ENCODE measurements at regions of chr5 and their contacts with region 1.

Region 1: GRCh38 chr5:56900858-56901578 is 8.4 kb upstream of the SETD9 start:
- DNase-seq: no peak
- ATAC-seq: peak; percentile 39 to 90 (median 69)
- H3K4me3 ChIP-seq: no peak overlapping the region
- H3K27ac ChIP-seq: no peak overlapping the region
- H3K4me1 ChIP-seq: no peaks in the 10 kb centered on the region
- H3K27me3 ChIP-seq: no peaks in the 10 kb centered on the region
- CTCF ChIP-seq: peak; percentile 73

Region 2: DNA sequence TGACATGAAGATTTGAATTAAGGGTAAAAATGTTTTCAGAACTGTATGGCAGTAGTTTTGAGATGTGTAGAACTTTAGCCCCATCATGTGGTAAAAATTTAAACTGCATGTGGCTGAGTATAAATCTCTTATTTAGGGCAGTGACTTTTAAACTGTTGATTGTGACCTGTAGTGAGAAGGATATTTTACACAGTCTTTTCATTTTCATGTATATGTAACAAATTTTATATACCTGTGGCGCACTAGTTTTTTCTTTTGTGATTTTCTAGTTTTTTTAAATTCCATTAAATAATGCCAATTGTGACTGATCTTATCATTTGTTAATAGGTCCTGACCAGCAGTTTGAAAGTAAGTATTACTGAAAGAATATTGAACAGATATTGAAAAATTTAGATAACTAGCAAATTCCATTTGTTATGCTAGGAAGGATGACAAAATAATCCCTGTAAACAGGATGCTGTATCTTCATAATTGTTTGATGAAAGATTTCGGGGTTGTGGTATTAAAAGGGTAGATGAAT is 320.1 kb after region 1 on chr5:
- intact Hi-C with region 1: loop called (anchors 2 to 5 kb)
- DNase-seq: no peak
- ATAC-seq: peak; percentile 70 to 84 (median 76)
- H3K4me3 ChIP-seq: no peak overlapping the region
- H3K27ac ChIP-seq: no peak overlapping the region
- H3K4me1 ChIP-seq: no peaks in the 10 kb centered on the region
- H3K27me3 ChIP-seq: no peaks in the 10 kb centered on the region
- CTCF ChIP-seq: peak; percentile 95

Region 3: DNA sequence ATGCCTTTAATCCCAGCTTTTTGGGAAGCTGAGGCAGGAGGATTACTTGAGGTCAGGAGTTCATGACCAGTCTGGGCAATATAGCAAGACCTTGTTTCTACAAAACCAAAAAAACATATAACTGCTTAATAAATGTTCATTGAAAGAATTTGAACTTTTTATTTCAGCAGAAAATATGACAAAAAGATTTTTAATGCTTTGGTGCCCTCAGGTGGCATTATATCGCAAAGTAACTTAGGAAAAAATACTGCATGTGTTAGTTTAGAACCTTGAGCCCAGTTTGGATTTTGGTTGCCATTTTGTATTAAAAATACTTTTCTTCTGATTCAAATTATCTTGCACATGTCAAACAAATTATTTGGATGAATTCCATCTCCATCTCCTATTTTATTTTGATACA is 376.1 kb after region 1 on chr5:
- intact Hi-C with region 1: loop called in 1 of 2 experiments (anchors 2 kb)
- DNase-seq: no peak
- ATAC-seq: no peak
- H3K4me3 ChIP-seq: no peak overlapping the region
- H3K27ac ChIP-seq: no peak overlapping the region
- H3K4me1 ChIP-seq: no peaks in the 10 kb centered on the region
- H3K27me3 ChIP-seq: no peaks in the 10 kb centered on the region
- CTCF ChIP-seq: no peak

Measured in psoas muscle (tissue), 8 donors.